Activated naive CD4-positive, alpha-beta T cell treated with anti-CD3 and anti-CD28 coated beads, Interleukin-2, amount 10 ng/mL, durations not matched to agents 7 days and 5 days (primary cell): ENCODE measurements at regions of chr1 and their contacts with region 1.

Region 1: DNA sequence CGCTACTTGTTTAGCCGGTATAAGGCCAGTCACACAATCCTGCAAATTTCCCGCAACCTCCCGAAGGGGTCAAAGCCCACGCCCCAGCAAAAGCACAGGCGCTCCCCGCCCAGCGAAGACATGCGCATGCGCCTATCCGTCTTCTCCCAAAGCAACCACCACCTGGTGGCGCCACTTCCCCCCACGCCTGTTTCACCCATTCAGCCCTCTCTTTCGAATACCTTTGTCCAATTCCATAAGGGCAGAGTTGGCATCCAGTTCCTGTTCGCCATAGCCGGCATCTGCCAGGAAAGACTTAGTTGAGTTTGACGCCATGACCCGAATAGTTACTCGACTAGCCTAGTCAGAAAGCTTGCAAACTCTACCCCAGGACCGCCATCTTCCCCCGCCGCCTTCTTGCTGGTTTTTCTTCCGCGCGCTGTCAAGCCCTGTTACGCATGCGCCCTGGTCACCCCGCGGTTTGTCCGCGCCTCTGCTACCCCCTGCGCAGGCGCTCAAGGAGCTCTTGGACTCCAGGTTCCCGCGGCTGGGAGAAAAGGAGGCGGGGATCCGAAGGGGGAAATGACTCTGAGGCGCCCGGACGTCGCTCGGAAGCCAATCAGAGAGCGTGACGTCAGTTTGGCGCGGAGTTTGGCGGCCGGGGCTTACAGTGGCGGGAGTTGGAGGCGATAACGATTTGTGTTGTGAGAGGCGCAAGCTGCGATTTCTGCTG is at the starts of genes DTL and INTS7:
- DNase-seq: peak; percentile 99
- H3K4me3 Mint-ChIP-seq: peak within 1 kb of the TSS; percentile 93
- H3K27ac Mint-ChIP-seq: peak within 1 kb of the TSS; percentile 96
- H3K4me1 Mint-ChIP-seq: peaks cover 72% of the 10 kb centered on the region
- H3K27me3 Mint-ChIP-seq: no peaks in the 10 kb centered on the region

Region 2: GRCh38 chr1:211680752-211681327 is 354.4 kb before region 1 on chr1:
- CTCF ChIA-PET with region 1: interaction called, 46 read pairs
- DNase-seq: peak; percentile 77
- H3K4me3 Mint-ChIP-seq: no peak overlapping the region
- H3K27ac Mint-ChIP-seq: peak overlapping the region; percentile 73
- H3K4me1 Mint-ChIP-seq: peaks cover 21% of the 10 kb centered on the region
- H3K27me3 Mint-ChIP-seq: no peaks in the 10 kb centered on the region

Region 3: DNA sequence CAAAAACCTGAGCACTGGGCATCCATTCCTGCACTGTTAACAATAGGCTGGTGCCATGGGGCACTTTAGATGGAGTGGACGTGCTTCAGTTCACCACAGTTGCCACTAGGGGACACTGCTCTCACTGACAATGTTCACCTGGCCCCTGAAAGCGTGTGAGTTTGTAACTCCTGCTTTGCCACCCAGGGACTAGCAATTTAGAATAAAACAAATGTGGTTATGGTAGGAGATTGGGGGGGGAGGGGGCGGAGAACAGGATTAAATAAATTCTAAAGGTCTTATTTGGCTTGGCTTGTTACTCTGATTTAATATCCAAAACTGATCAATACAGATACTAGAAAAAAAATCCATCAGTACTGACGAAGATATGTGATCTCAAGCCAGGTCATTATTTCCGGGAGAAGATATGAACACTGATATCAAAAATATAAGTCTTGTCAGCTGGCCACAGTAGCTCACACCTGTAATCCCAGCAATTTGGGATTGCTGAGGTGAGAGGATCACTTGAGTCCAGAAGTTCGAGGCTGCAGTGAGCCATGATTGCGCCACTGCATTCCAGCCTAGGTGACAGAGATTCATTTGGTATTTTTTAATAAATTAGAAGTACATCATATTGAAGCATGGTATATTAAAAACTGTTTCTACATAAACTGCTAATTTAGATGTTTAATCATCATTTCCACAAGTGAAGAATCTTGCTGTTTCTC is 23.1 kb before region 1 on chr1:
- CTCF ChIA-PET with region 1: interaction called, 18 read pairs
- DNase-seq: peak; percentile 75
- H3K4me3 Mint-ChIP-seq: no peak overlapping the region
- H3K27ac Mint-ChIP-seq: no peak overlapping the region
- H3K4me1 Mint-ChIP-seq: peaks cover 3% of the 10 kb centered on the region
- H3K27me3 Mint-ChIP-seq: no peaks in the 10 kb centered on the region

Region 4: GRCh38 chr1:212021563-212021962 is 13.7 kb before region 1 on chr1:
- CTCF ChIA-PET with region 1: interaction called, 13 read pairs
- DNase-seq: no peak
- H3K4me3 Mint-ChIP-seq: no peak overlapping the region
- H3K27ac Mint-ChIP-seq: no peak overlapping the region
- H3K4me1 Mint-ChIP-seq: no peaks in the 10 kb centered on the region
- H3K27me3 Mint-ChIP-seq: no peaks in the 10 kb centered on the region

Region 5: DNA sequence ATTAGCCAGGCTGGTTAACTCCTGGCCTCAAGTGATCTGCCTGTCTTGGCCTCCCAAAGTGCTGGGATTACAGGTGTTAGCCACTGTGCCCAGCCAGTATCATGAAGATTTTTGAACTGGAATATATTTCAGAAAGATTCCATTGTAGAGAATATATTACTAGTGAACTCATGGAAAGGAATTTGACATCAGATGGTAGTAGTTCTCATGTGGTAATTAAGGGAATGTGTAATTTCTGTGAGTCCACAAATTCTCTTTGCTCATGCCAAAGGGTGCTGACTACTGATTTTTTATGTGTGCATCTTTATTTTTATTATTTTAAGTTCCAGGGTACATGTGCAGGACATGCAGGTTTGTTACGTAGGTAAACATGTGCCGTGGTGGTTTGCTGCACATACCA is 10.7 kb after region 1 on chr1:
- CTCF ChIA-PET with region 1: interaction called, 12 read pairs
- DNase-seq: no peak
- H3K4me3 Mint-ChIP-seq: no peak overlapping the region
- H3K27ac Mint-ChIP-seq: no peak overlapping the region
- H3K4me1 Mint-ChIP-seq: peaks cover 19% of the 10 kb centered on the region
- H3K27me3 Mint-ChIP-seq: no peaks in the 10 kb centered on the region